ENCODE measurements at regions of chr17 and their contacts with region 1.

Region 1: GRCh38 chr17:52207796-52208195 is 49.3 kb upstream of the CA10 start:
- DNase-seq: no peak
- H3K4me3 Mint-ChIP-seq: no peak overlapping the region
- H3K27ac Mint-ChIP-seq: no peak overlapping the region
- H3K4me1 Mint-ChIP-seq: peaks cover 21% of the 10 kb centered on the region
- H3K27me3 Mint-ChIP-seq: no peaks in the 10 kb centered on the region
- CTCF ChIP-seq: no peak

Region 2: DNA sequence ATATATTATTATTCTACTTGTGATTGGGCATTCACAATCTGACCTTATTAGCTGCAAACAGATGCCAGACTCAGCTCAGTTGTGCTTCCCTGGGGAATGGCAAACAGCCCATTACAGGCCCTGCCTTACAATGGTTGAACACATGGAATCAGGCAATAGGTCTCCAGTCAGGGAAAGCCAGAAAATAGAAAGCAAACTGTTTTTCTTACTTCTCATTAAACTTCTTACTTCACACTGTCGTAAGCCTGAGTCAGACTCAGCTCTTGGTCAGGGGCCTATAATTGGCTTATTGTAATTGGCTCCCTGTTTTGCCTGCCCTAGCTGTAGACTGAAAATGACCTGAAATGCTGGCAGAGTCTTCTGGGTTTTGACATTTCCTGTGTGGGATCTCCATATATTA is 27.7 kb after region 1 on chr17:
- CTCF ChIA-PET with region 1: no interaction called
- intact Hi-C with region 1: loop called (anchors 2 kb)
- DNase-seq: no peak
- H3K4me3 Mint-ChIP-seq: no peak overlapping the region
- H3K27ac Mint-ChIP-seq: no peak overlapping the region
- H3K4me1 Mint-ChIP-seq: no peaks in the 10 kb centered on the region
- H3K27me3 Mint-ChIP-seq: no peaks in the 10 kb centered on the region
- CTCF ChIP-seq: no peak

Region 3: GRCh38 chr17:52244689-52245088 is 36.9 kb after region 1 on chr17:
- CTCF ChIA-PET with region 1: no interaction called
- intact Hi-C with region 1: loop called (anchors 5 kb)
- DNase-seq: no peak
- H3K4me3 Mint-ChIP-seq: no peak overlapping the region
- H3K27ac Mint-ChIP-seq: no peak overlapping the region
- H3K4me1 Mint-ChIP-seq: no peaks in the 10 kb centered on the region
- H3K27me3 Mint-ChIP-seq: no peaks in the 10 kb centered on the region
- CTCF ChIP-seq: no peak